ENCODE measurements at regions of chr18 and their contacts with region 1.

Region 1: GRCh38 chr18:37476182-37476581 is 89.4 kb downstream of the CELF4 start:
- DNase-seq: peak; percentile 56
- H3K4me3 Mint-ChIP-seq: no peak overlapping the region
- H3K27ac Mint-ChIP-seq: no peak overlapping the region
- H3K4me1 Mint-ChIP-seq: no peaks in the 10 kb centered on the region
- H3K27me3 Mint-ChIP-seq: peaks cover 11% of the 10 kb centered on the region
- CTCF ChIP-seq: peak; percentile 30

Region 2: GRCh38 chr18:37385846-37386778 is 90.1 kb before region 1 on chr18:
- CTCF ChIA-PET with region 1: interaction called, 3 read pairs
- POLR2A ChIA-PET with region 1: no interaction called
- intact Hi-C with region 1: loop called (anchors 10 kb)
- DNase-seq: peak; percentile 54
- H3K4me3 Mint-ChIP-seq: no peak overlapping the region
- H3K27ac Mint-ChIP-seq: no peak overlapping the region
- H3K4me1 Mint-ChIP-seq: no peaks in the 10 kb centered on the region
- H3K27me3 Mint-ChIP-seq: peaks cover 15% of the 10 kb centered on the region
- CTCF ChIP-seq: peak; percentile 53

Region 3: GRCh38 chr18:37787452-37787851 is 311.3 kb after region 1 on chr18:
- CTCF ChIA-PET with region 1: no interaction called
- POLR2A ChIA-PET with region 1: no interaction called
- intact Hi-C with region 1: no loop called
- DNase-seq: no peak
- H3K4me3 Mint-ChIP-seq: no peak overlapping the region
- H3K27ac Mint-ChIP-seq: no peak overlapping the region
- H3K4me1 Mint-ChIP-seq: no peaks in the 10 kb centered on the region
- H3K27me3 Mint-ChIP-seq: no peaks in the 10 kb centered on the region
- CTCF ChIP-seq: no peak